ENCODE measurements at regions of chr14 and their contacts with region 1.

Region 1: DNA sequence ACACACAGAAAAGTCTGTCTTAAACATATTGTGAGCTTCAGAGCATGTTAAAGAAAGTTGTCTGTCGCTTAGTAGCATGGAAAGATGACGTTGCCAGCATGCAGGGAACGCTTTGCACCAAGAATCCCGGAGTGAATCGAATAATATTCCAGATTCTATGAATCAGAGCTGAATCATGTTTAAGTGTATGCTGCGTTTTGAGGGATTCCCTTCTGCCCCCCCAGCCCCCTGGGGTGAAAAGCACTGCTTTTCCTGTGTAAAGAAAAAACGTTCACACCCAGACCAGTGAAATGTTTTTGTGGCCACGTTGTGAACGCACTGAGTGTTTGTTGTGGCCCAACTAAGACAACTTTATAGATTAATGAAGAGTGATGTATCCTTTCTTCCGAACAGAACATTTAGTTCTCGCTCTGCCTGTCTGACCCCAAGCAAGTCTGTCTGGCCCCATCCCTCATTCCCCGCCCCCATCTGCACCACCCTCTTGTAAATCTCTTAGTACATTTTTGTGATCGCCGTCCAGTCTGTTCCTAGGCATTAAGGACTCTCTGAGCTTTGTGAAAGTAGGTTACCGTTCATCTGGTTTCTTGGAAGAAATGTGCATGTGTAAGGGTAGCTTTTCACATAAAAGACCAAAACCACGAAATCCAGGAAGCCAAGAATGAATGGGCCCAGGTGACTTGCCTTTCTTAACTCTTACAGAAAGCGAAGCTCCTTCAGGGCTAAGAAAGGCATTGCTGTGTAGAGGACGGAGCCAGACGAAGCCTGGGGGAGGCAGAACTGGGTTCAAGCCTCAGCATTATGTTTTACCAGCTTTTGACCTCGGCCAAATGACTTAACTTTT is 103.0 kb downstream of the SAMD4A start:
- DNase-seq: peak; percentile 74
- H3K4me3 Mint-ChIP-seq: peak overlapping the region; percentile 69
- H3K27ac Mint-ChIP-seq: peak overlapping the region; percentile 96
- H3K4me1 Mint-ChIP-seq: peaks cover 53% of the 10 kb centered on the region
- H3K27me3 Mint-ChIP-seq: no peaks in the 10 kb centered on the region
- CTCF ChIP-seq: no peak

Region 2: GRCh38 chr14:54267172-54267571 is 402.8 kb before region 1 on chr14:
- CTCF ChIA-PET with region 1: no interaction called
- POLR2A ChIA-PET with region 1: no interaction called
- intact Hi-C with region 1: no loop called
- DNase-seq: no peak
- H3K4me3 Mint-ChIP-seq: no peak overlapping the region
- H3K27ac Mint-ChIP-seq: no peak overlapping the region
- H3K4me1 Mint-ChIP-seq: no peaks in the 10 kb centered on the region
- H3K27me3 Mint-ChIP-seq: no peaks in the 10 kb centered on the region
- CTCF ChIP-seq: no peak

Region 3: GRCh38 chr14:54652188-54652587 is 17.8 kb before region 1 on chr14:
- CTCF ChIA-PET with region 1: interaction called, 4 read pairs
- POLR2A ChIA-PET with region 1: interaction called, 13 read pairs
- intact Hi-C with region 1: no loop called
- DNase-seq: peak; percentile 90
- H3K4me3 Mint-ChIP-seq: peak overlapping the region; percentile 63
- H3K27ac Mint-ChIP-seq: peak overlapping the region; percentile 80
- H3K4me1 Mint-ChIP-seq: peaks cover 40% of the 10 kb centered on the region
- H3K27me3 Mint-ChIP-seq: no peaks in the 10 kb centered on the region
- CTCF ChIP-seq: no peak

Region 4: GRCh38 chr14:54658836-54659764 is 10.8 kb before region 1 on chr14:
- CTCF ChIA-PET with region 1: interaction called, 11 read pairs
- POLR2A ChIA-PET with region 1: interaction called, 17 read pairs
- intact Hi-C with region 1: no loop called
- DNase-seq: peak; percentile 35
- H3K4me3 Mint-ChIP-seq: no peak overlapping the region
- H3K27ac Mint-ChIP-seq: no peak overlapping the region
- H3K4me1 Mint-ChIP-seq: peaks cover 24% of the 10 kb centered on the region
- H3K27me3 Mint-ChIP-seq: no peaks in the 10 kb centered on the region
- CTCF ChIP-seq: no peak

Region 5: DNA sequence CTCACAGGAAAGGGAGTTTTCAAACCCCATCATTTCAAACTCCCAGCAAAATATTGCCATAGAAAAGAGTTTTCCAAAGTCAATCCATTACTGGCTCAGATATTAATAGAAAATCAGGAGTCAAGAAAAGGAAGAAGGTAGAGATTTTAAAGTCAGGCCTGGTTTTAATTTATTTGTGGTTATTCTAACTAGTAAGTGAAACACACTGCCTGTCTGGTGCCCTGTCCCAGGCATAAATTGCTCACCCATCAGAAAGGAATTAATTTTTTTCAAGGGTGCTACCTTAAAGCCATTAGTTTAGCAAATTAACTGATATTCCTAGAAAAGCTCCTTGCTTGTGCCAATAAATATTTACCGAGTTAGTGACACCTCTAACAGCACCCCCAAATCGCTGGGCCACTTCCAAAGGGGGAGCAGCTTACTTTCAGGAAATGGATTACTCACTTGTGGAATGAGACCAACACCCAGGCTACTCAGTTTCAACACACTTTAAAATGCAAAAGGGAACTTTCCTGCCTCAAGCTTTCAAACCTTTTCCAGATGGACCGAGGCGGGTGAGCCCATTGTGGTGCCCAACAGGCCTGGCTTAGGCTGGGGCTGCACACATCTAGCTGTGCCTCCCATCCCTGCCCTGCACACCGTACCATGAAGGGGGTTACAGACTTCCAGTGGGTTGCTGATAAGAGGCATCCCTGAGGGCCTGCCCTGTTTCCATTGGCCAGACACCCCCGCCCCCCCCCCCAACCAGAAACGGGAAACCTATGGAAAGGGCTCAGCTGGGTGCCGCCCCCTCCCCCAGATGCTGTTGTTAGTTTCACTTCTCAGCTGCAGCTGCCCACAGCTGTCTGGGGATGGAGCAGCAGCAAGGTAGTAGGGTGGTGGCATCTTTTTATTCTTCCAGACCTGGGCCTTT is 14.2 kb after region 1 on chr14:
- CTCF ChIA-PET with region 1: interaction called, 4 read pairs
- POLR2A ChIA-PET with region 1: interaction called, 42 read pairs
- intact Hi-C with region 1: no loop called
- DNase-seq: peak; percentile 78
- H3K4me3 Mint-ChIP-seq: peak overlapping the region; percentile 36
- H3K27ac Mint-ChIP-seq: peak overlapping the region; percentile 89
- H3K4me1 Mint-ChIP-seq: peaks cover 55% of the 10 kb centered on the region
- H3K27me3 Mint-ChIP-seq: no peaks in the 10 kb centered on the region
- CTCF ChIP-seq: no peak